ENCODE measurements at regions of chr9 and their contacts with region 1.

Region 1: DNA sequence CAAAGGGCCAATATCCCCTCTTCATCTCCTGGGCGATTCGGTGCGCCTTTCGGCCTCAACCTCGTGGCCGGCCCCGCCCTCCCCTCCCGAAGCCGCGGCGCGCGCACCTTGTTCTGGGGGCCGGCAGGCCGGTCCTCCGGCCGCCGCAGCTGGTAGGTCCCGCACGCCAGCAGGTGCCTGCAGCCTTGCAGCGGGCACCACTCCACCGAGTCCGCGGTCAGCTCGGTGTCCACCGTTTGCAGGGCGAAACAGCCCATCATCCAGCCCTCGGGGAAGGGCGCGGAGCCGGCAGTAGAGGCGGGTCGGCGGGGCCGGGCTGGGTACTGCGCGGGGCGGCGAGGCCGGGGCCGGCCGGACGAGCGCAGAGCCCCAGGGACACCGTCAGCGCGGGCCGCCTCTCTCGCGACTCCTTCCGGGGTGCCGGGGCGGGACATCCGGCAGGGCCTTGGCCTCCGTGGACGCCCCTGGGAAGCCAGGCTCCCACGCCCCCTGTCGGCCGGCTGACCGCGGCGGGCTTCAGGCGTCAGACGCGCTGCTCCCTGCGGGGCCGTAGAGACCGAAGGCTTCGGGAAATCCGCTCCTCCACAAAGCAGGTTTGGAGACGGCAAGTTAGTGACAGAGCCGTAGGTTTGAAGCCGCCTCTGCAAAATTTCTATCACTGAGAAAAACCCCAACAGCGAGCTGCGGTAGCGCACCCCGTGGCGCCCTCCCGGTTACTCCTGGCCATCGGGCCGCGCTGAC is at the start of gene DPH7:
- DNase-seq: peak; percentile 88 to 91
- ATAC-seq: peak; percentile 88 to 93
- H3K4me3 ChIP-seq: peak within 1 kb of the TSS; percentile 70 to 97 (median 84)
- H3K27ac ChIP-seq: peak within 1 kb of the TSS; percentile 72 to 95 (median 84)
- H3K4me1 ChIP-seq: peaks cover 32 to 43% of the 10 kb centered on the region in 2 donors
- H3K27me3 ChIP-seq: no peaks in the 10 kb centered on the region
- CTCF ChIP-seq: peak; percentile 91 to 99 (median 94)
- POLR2A ChIP-seq: peak; percentile 49 to 80
- total RNA-seq, gene DPH7: 10.0 to 25.2 (median 13.6) TPM

Region 2: GRCh38 chr9:137370865-137371520 is 207.7 kb before region 1 on chr9:
- in situ Hi-C with region 1: no loop called
- intact Hi-C with region 1: no loop called
- DNase-seq: no peak
- ATAC-seq: no peak
- H3K4me3 ChIP-seq: no peak overlapping the region
- H3K27ac ChIP-seq: no peak overlapping the region
- H3K4me1 ChIP-seq: no peaks in the 10 kb centered on the region
- H3K27me3 ChIP-seq: no peaks in the 10 kb centered on the region
- CTCF ChIP-seq: no peak
- POLR2A ChIP-seq: no peak

Region 3: GRCh38 chr9:137551651-137552384 is 26.9 kb before region 1 on chr9 and contains the start of gene MRPL41:
- in situ Hi-C with region 1: no loop called
- intact Hi-C with region 1: loop called (anchors 1 kb)
- DNase-seq: peak; percentile 80 to 89
- ATAC-seq: peak; percentile 63 to 70
- H3K4me3 ChIP-seq: peak within 1 kb of the TSS; percentile 71 to 87 (median 76)
- H3K27ac ChIP-seq: peak within 1 kb of the TSS; percentile 95 to 99 (median 97)
- H3K4me1 ChIP-seq: peaks cover 30 to 36% of the 10 kb centered on the region in 2 donors
- H3K27me3 ChIP-seq: no peaks in the 10 kb centered on the region
- CTCF ChIP-seq: no peak
- POLR2A ChIP-seq: peak; percentile 88 to 96
- total RNA-seq, gene MRPL41: 107 to 137 (median 126) TPM

Region 4: GRCh38 chr9:137590462-137591383 is 12.0 kb after region 1 on chr9 and contains the start of gene ZMYND19:
- in situ Hi-C with region 1: no loop called
- intact Hi-C with region 1: loop called (anchors 1 kb)
- DNase-seq: peak; percentile 79 to 86
- ATAC-seq: peak; percentile 92 to 95
- H3K4me3 ChIP-seq: peak within 1 kb of the TSS; percentile 67 to 99 (median 81)
- H3K27ac ChIP-seq: peak within 1 kb of the TSS; percentile 29 to 64 (median 59)
- H3K4me1 ChIP-seq: peaks cover 7 to 12% of the 10 kb centered on the region in 2 donors
- H3K27me3 ChIP-seq: no peaks in the 10 kb centered on the region
- CTCF ChIP-seq: no peak
- POLR2A ChIP-seq: no peak
- total RNA-seq, gene ZMYND19: 5.8 to 15.2 (median 11.8) TPM

Region 5: GRCh38 chr9:137618105-137619067 is 39.7 kb after region 1 on chr9 and contains the start of gene EHMT1:
- in situ Hi-C with region 1: no loop called
- intact Hi-C with region 1: loop called (anchors 2 kb)
- DNase-seq: peak; percentile 66 to 82
- ATAC-seq: peak; percentile 88 to 91
- H3K4me3 ChIP-seq: peak within 1 kb of the TSS; percentile 77 to 100 (median 96)
- H3K27ac ChIP-seq: peak within 1 kb of the TSS; percentile 90 to 99 (median 92)
- H3K4me1 ChIP-seq: peaks cover 39 to 41% of the 10 kb centered on the region in 2 donors
- H3K27me3 ChIP-seq: no peaks in the 10 kb centered on the region
- CTCF ChIP-seq: peak in 2 of 5 experiments; percentile 12 to 17
- POLR2A ChIP-seq: peak; percentile 72 to 74
- total RNA-seq, gene EHMT1: 38.6 to 77.8 (median 54.3) TPM

Region 6: GRCh38 chr9:137639303-137640051 is 60.8 kb after region 1 on chr9:
- in situ Hi-C with region 1: no loop called
- intact Hi-C with region 1: no loop called
- DNase-seq: no peak
- ATAC-seq: no peak
- H3K4me3 ChIP-seq: no peak overlapping the region
- H3K27ac ChIP-seq: no peak overlapping the region
- H3K4me1 ChIP-seq: peaks cover 10 to 20% of the 10 kb centered on the region in 2 donors
- H3K27me3 ChIP-seq: no peaks in the 10 kb centered on the region
- CTCF ChIP-seq: no peak
- POLR2A ChIP-seq: no peak

Measured in gastrocnemius medialis (tissue), 4 donors.